CD14-positive monocyte (primary cell): ENCODE measurements at regions of chr16 and their contacts with region 1.

Region 1: GRCh38 chr16:920717-921116 is 50.1 kb downstream of the LMF1 start:
- DNase-seq: no peak
- H3K4me3 ChIP-seq: no peak overlapping the region
- H3K4me3 Mint-ChIP-seq: no peak overlapping the region
- H3K27ac ChIP-seq: no peak overlapping the region
- H3K27ac Mint-ChIP-seq: peak overlapping the region in 1 of 7 donors; percentile 50
- H3K4me1 ChIP-seq: no peaks in the 10 kb centered on the region
- H3K4me1 Mint-ChIP-seq: no peaks in the 10 kb centered on the region
- H3K27me3 ChIP-seq: no peaks in the 10 kb centered on the region
- H3K27me3 Mint-ChIP-seq: peaks cover 0 to 2% (median 0%) of the 10 kb centered on the region in 3 donors
- CTCF ChIP-seq: no peak

Region 2: GRCh38 chr16:825341-826061 is 95.2 kb before region 1 on chr16:
- intact Hi-C with region 1: loop called in 1 of 2 experiments (anchors 10 kb)
- DNase-seq: no peak
- H3K4me3 ChIP-seq: no peak overlapping the region
- H3K4me3 Mint-ChIP-seq: peak overlapping the region in 1 of 2 donors; percentile 9
- H3K27ac ChIP-seq: no peak overlapping the region
- H3K27ac Mint-ChIP-seq: no peak overlapping the region
- H3K4me1 ChIP-seq: no peaks in the 10 kb centered on the region
- H3K4me1 Mint-ChIP-seq: no peaks in the 10 kb centered on the region
- H3K27me3 ChIP-seq: no peaks in the 10 kb centered on the region
- H3K27me3 Mint-ChIP-seq: peaks cover 8 to 15% (median 13%) of the 10 kb centered on the region in 3 donors
- CTCF ChIP-seq: no peak